ENCODE measurements at regions of chr11 and their contacts with region 1.

Region 1: GRCh38 chr11:112219476-112220232 is 6.6 kb upstream of the PTS start:
- DNase-seq: peak; percentile 45
- ATAC-seq: peak; percentile 99
- H3K4me3 Mint-ChIP-seq: no peak overlapping the region
- H3K27ac Mint-ChIP-seq: no peak overlapping the region
- H3K4me1 Mint-ChIP-seq: no peaks in the 10 kb centered on the region
- H3K27me3 Mint-ChIP-seq: no peaks in the 10 kb centered on the region

Region 2: DNA sequence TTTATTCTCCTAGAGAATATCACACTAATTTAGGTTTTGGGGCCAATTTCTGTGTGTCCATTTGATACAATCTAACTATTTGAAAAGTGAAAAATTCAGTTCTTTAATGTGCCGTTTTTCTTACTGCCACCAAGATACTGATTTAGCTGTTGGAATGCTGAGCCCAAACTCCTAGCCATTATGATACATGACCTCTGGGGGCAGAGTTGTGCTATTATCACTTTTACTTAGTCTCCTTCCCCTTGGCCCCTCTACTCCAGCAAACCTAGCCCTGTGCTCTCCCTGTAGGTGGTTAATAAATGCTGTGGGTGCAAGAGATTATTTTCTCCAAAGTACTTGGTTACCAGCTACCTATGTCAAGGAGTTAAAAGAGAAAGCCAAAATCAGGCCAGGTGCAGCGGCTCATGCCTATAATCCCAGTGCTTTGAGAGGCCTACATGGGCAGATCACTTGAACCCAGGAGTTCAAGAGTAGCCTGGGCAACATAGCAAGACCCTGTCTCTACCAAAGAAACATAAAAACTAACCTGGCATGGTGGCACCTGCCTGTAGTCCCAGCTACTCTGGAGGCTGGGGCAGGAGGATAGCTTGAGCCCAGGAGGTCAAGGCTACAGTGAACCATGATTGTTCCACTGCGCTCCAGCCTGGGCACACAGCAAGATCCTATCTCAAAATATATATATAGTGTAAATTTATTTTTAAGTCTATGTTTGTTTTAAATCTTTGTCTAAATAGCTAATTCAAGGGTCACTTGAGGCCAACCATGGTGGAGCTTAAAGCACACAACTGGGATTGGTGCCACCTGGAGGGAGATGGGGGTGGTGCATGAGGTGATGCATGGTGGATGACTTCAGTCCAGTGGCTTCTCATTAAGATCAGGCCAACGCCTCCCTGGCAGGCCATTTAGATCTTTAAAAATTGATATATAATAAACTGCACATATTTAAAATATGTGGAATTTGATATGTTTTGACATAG is 234.2 kb after region 1 on chr11:
- CTCF ChIA-PET with region 1: interaction called, 4 read pairs
- POLR2A ChIA-PET with region 1: no interaction called
- intact Hi-C with region 1: loop called (anchors 10 kb)
- DNase-seq: peak; percentile 75
- ATAC-seq: no peak
- H3K4me3 Mint-ChIP-seq: no peak overlapping the region
- H3K27ac Mint-ChIP-seq: no peak overlapping the region
- H3K4me1 Mint-ChIP-seq: no peaks in the 10 kb centered on the region
- H3K27me3 Mint-ChIP-seq: no peaks in the 10 kb centered on the region

Region 3: GRCh38 chr11:112555491-112556364 is 336.1 kb after region 1 on chr11:
- CTCF ChIA-PET with region 1: interaction called, 5 read pairs
- POLR2A ChIA-PET with region 1: no interaction called
- intact Hi-C with region 1: loop called (anchors 1 to 5 kb)
- DNase-seq: peak; percentile 86
- ATAC-seq: peak; percentile 91
- H3K4me3 Mint-ChIP-seq: no peak overlapping the region
- H3K27ac Mint-ChIP-seq: no peak overlapping the region
- H3K4me1 Mint-ChIP-seq: peaks cover 3% of the 10 kb centered on the region
- H3K27me3 Mint-ChIP-seq: no peaks in the 10 kb centered on the region

Region 4: GRCh38 chr11:112795142-112795815 is 575.6 kb after region 1 on chr11:
- CTCF ChIA-PET with region 1: no interaction called
- POLR2A ChIA-PET with region 1: no interaction called
- intact Hi-C with region 1: loop called in 1 of 2 experiments (anchors 5 kb)
- DNase-seq: peak; percentile 64
- ATAC-seq: peak; percentile 72
- H3K4me3 Mint-ChIP-seq: no peak overlapping the region
- H3K27ac Mint-ChIP-seq: no peak overlapping the region
- H3K4me1 Mint-ChIP-seq: peaks cover 2% of the 10 kb centered on the region
- H3K27me3 Mint-ChIP-seq: no peaks in the 10 kb centered on the region